ENCODE measurements at regions of chr1 and their contacts with region 1.

Region 1: DNA sequence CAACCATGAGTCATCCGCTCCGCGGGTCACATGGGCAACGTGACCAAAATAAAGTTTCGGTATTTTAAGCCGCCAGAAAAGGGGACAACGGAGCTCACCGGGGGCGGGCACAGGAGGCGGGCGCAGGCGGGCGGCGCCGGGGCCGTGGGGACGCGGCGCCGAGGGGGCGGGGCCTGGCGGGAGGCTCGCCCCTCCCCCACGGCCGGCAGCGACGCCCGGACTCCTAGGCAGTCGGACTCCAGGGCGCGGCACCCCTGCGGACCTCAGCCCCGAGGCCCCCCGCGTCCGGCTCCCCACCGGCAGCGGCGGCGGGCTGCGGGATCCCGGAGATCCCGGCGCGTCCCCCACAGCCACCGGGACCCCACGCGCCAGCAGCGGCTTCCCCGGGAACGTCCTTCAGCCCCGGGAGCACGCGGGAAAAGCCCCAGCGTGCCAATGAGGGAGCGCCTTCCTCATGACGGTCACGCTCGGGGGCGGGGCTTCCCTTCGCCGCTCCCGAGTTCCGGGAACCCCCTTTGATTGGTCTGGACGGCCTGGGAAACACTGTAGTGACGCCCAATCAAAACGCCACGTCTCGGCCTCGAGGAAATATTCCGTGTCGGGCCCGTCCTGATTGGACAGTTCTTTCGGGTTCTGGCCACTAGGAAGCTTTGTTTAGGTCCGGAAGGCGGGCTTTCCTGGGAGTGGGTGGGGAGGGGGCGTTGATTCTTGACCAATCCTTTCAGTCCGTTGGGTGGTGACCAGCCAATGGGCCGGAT is 515 bp upstream of the CAMTA1 start:
- DNase-seq: peak; percentile 100
- H3K4me3 ChIP-seq: peak overlapping the region; percentile 73
- CTCF ChIP-seq: no peak

Region 2: GRCh38 chr1:6770751-6771440 is 13.8 kb before region 1 on chr1:
- CTCF ChIA-PET with region 1: interaction called, 11 read pairs
- POLR2A ChIA-PET with region 1: interaction called, 4 read pairs
- DNase-seq: no peak
- H3K4me3 ChIP-seq: no peak overlapping the region
- CTCF ChIP-seq: no peak

Region 3: DNA sequence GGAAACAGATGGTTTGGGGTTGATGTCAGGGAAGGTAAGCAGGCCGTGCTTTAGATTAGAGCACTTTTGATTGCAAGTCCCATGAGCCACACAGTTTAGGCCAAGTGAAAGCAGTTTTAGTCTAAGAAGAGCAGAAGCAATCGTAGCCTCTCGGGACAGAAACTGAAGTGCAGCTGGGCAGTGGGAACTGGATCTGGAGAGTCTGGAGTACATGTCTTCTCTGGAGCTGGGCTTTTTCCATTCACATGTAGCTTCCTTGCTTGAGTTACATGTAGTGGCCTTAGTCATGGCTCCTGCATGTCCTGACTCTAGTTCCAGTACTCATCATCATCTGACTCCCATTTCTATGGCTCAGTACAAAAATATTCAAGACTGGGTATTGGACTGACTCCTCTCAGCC is 17.2 kb after region 1 on chr1:
- CTCF ChIA-PET with region 1: interaction called, 4 read pairs
- POLR2A ChIA-PET with region 1: interaction called, 13 read pairs
- DNase-seq: no peak
- H3K4me3 ChIP-seq: no peak overlapping the region
- CTCF ChIP-seq: no peak

Measured in AG04449 (cell line).